ENCODE measurements at regions of chr12 and their contacts with region 1.

Region 1: GRCh38 chr12:132153501-132154340 is 9.5 kb downstream of the NOC4L start:
- DNase-seq: peak; percentile 68 to 88 (median 85)
- ATAC-seq: peak; percentile 90 to 91
- H3K4me3 ChIP-seq: no peak overlapping the region
- H3K27ac ChIP-seq: no peak overlapping the region
- H3K4me1 ChIP-seq: no peaks in the 10 kb centered on the region
- H3K27me3 ChIP-seq: no peaks in the 10 kb centered on the region

Region 2: DNA sequence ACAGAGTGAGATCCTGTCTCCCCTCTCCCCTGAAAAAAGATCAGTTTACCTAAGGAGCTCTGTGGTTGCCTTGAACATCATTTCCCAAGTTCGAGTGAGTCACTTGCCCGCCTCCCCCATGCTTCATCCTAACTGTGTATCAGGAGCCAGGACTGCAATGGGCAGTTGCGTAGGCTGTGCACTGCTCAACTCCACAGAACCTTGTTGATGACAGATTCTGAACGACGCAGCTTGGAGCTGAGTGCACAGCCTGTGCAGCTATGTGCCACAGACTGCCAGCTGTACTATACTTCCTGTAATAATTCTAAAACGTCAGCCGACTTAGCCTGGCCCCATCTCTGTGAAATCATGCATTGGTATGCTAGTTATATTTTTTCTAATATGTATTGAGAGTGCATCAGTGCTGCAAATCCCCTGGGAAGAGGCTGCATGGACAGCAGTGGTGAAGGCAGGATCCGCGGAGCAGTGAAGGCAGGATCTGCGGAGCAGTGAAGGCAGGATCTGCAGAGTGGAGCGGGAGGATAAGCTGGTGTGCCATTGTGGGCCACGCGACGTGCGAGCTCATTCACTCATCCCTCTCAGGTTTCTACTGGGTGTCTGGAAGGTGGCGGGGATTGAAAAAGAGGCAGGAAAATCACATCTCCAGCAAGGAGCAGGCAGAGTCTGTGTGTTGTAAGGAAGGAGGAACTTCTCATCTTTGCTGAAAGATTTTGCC is 94.9 kb after region 1 on chr12:
- intact Hi-C with region 1: no loop called
- DNase-seq: peak in 1 of 3 donors; percentile 24
- ATAC-seq: no peak
- H3K4me3 ChIP-seq: no peak overlapping the region
- H3K27ac ChIP-seq: no peak overlapping the region
- H3K4me1 ChIP-seq: no peaks in the 10 kb centered on the region
- H3K27me3 ChIP-seq: no peaks in the 10 kb centered on the region

Region 3: GRCh38 chr12:132414634-132415326 is 261.1 kb after region 1 on chr12:
- intact Hi-C with region 1: loop called in 1 of 4 experiments (anchors 10 kb)
- DNase-seq: peak; percentile 84 to 92 (median 89)
- ATAC-seq: peak; percentile 90 to 93
- H3K4me3 ChIP-seq: no peak overlapping the region
- H3K27ac ChIP-seq: no peak overlapping the region
- H3K4me1 ChIP-seq: no peaks in the 10 kb centered on the region
- H3K27me3 ChIP-seq: no peaks in the 10 kb centered on the region

Region 4: GRCh38 chr12:132523576-132524331 is 370.0 kb after region 1 on chr12:
- intact Hi-C with region 1: loop called in 1 of 4 experiments (anchors 5 kb)
- DNase-seq: peak; percentile 71 to 89 (median 88)
- ATAC-seq: peak; percentile 57 to 63
- H3K4me3 ChIP-seq: no peak overlapping the region
- H3K27ac ChIP-seq: no peak overlapping the region
- H3K4me1 ChIP-seq: peaks cover 3% of the 10 kb centered on the region
- H3K27me3 ChIP-seq: no peaks in the 10 kb centered on the region

Region 5: DNA sequence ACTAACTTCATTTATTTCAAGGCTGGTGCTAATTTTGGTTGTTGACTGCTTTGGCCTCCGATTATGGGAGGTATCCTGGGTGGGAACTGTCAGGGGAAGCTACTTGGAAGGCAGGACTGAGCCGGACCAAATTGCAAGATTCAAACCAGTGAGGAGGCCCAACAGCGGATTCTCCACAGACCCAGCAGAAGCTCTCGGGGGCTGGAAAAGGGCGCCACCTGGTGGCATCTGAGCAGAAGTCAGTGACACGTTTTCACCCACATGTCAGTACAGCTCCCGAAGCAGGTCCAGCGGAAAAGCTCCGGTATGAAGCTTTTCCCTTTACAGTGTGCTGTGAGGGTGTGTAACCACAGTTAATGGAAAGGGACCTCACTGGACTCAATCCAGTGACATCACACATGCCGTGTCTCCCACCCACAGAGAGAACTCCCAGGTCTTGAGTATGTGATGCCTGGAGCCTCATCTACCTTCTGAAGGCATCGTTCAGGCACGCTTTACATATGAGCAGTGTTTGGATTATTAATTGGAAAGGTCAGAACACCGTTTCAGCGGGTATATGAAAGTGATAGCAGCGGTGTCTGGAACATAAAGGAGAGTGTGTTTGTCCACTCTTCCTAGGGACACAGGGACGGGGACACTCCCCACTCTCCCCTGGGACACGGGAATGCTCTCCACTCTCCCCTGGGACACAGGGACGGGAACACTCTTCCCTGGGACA is 461.3 kb after region 1 on chr12:
- intact Hi-C with region 1: loop called in 2 of 4 experiments (anchors 10 kb)
- DNase-seq: peak; percentile 81 to 92 (median 90)
- ATAC-seq: peak; percentile 86 to 89
- H3K4me3 ChIP-seq: no peak overlapping the region
- H3K27ac ChIP-seq: no peak overlapping the region
- H3K4me1 ChIP-seq: no peaks in the 10 kb centered on the region
- H3K27me3 ChIP-seq: no peaks in the 10 kb centered on the region

Measured in right cardiac atrium (tissue), 5 donors.